Mucosa of descending colon (tissue), 3 donors: ENCODE measurements at regions of chr5 and their contacts with region 1.

Region 1: GRCh38 chr5:59673438-59674058 is 220.0 kb downstream of the PDE4D start:
- DNase-seq: no peak
- ATAC-seq: peak; percentile 69
- H3K4me3 ChIP-seq: no peak overlapping the region
- H3K4me1 ChIP-seq: no peaks in the 10 kb centered on the region
- CTCF ChIP-seq: peak; percentile 47

Region 2: GRCh38 chr5:59188419-59189225 is 484.9 kb before region 1 on chr5:
- intact Hi-C with region 1: loop called in 1 of 2 experiments (anchors 5 kb)
- DNase-seq: peak; percentile 66 to 77 (median 67)
- ATAC-seq: peak; percentile 94
- H3K4me3 ChIP-seq: no peak overlapping the region
- H3K4me1 ChIP-seq: no peaks in the 10 kb centered on the region
- CTCF ChIP-seq: peak; percentile 45

Region 3: DNA sequence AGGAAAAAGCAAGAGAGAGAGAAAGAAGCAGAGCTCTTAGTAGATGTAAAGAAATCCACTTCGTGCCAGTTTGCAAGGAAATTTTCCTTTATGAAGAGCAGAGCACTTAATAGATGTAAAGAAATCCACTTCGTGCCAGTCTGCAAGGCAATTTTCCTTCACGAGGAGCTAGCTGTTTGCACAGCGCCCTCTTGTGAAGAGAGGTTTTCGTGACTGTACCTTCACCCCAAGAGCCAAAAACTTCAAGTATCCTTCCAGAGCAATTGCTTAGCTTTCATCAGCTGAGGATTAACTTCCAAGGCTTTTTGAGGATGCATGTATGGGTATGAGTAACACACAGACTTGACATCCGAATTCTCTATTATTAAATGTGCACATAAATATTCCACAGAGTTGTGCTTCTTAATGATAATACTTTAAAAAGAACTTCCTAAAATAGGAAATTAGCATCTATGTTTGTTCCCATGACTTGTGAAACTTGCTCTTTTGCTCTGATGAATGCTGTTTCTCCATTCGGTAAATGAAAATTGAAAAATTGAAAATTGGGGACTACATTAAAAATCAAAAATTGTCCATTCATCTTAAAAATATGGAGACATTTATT is 305.7 kb before region 1 on chr5:
- intact Hi-C with region 1: loop called in 1 of 2 experiments (anchors 10 kb)
- DNase-seq: peak in 2 of 3 donors; percentile 38 to 87
- ATAC-seq: peak; percentile 76
- H3K4me3 ChIP-seq: no peak overlapping the region
- H3K4me1 ChIP-seq: peaks cover 5% of the 10 kb centered on the region
- CTCF ChIP-seq: peak; percentile 44

Region 4: DNA sequence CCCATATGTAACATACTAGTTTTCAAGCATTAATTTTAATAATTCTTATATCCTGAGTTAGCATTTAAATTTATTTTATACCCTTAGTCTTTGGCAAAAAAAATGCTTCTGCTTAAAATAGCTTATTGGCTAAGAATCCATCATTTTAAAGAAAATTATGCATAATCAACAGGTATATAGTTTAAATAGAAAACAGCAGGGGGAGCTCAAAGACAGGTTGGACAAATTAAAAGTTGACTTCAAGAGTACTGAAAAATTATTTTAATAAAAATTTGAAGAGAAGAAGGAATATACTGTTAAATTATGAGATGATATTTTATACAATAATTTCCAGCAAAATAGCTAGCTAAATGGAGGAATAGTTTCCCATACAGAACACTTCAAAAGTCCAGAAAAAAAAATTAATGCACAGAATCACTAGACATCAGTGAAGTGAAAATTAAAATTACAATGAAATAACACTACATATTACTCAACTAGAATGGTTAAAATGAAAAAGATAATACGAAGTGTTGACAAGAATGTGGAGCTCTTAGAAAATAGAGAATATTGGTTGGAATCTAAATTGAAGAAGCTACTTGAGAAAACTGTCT is 167.2 kb before region 1 on chr5:
- intact Hi-C with region 1: loop called in 1 of 2 experiments (anchors 10 kb)
- DNase-seq: no peak
- ATAC-seq: no peak
- H3K4me3 ChIP-seq: no peak overlapping the region
- H3K4me1 ChIP-seq: no peaks in the 10 kb centered on the region
- CTCF ChIP-seq: no peak

Region 5: GRCh38 chr5:59790399-59791125 is 117.0 kb after region 1 on chr5:
- intact Hi-C with region 1: no loop called
- DNase-seq: no peak
- ATAC-seq: peak; percentile 42
- H3K4me3 ChIP-seq: no peak overlapping the region
- H3K4me1 ChIP-seq: no peaks in the 10 kb centered on the region
- CTCF ChIP-seq: no peak

Region 6: DNA sequence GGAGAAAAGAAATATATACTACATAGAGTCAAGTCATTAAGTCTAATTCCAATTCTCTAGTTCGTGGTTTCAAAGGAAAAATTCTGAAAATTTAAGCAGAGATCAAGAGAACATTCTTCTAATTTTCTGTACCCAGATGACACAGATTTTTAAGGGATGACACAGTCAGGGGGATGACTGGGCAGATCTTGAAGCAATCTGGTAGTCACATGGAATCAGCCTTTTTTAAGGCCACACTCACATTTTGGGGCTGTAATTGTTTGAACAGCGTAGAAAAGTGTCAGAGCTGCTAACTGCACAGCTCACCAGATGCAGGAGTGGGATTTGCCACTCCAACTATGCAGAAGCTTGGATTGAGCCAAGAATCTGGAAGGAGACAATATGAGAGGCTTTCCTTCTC is 199.6 kb after region 1 on chr5:
- intact Hi-C with region 1: no loop called
- DNase-seq: no peak
- ATAC-seq: no peak
- H3K4me3 ChIP-seq: no peak overlapping the region
- H3K4me1 ChIP-seq: no peaks in the 10 kb centered on the region
- CTCF ChIP-seq: no peak